ENCODE measurements at regions of chr12 and their contacts with region 1.

Region 1: DNA sequence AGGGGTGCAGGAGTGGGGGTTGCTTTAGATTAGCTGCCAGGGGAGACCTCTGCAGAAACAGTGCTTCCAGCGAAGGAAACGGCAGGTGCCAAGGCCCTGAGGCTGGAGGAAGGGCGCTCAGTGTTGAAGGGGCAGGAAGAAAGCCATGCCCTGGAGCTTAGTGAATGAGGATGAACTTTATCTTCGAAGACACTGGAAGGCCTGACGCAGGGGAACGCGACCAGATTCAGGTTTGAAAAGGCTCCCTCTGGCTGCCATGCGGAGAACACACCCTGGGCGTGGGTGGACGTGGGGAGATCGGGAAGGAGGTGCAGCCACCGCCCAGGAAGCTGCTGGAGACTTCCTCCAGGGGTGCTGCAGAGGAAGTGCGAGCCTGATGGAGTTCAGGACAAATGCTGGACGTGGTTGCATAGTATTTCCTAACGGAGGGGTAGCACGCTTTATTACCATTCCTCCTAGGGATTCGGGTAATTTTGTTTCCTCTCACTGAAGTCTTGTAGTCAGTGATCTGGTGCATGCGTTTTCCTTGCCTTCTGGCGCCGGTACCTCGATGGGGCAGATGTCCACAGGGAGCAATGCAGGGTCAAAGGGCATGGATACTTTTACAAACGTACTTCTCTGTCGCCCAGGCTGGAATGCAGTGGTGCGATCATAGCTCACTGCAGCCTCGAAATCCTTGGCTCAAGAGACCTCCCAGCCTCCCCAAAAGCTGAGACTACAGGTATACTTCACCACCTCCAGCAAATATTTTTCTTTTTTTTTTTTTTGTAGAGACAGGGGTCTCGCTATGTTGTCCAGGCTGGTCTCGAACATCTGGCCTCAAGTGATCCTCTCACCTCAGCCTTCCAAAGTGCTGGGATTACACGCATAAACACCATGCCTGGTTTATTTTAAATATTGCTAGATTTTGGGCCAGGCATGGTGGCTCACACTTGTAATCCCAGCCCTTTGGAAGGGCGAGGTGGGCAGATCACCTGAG is 26.4 kb upstream of the UBC start:
- DNase-seq: peak; percentile 80
- ATAC-seq: peak; percentile 53
- H3K4me3 Mint-ChIP-seq: no peak overlapping the region
- H3K27ac Mint-ChIP-seq: no peak overlapping the region
- H3K4me1 Mint-ChIP-seq: peaks cover 10% of the 10 kb centered on the region
- H3K27me3 Mint-ChIP-seq: no peaks in the 10 kb centered on the region

Region 2: DNA sequence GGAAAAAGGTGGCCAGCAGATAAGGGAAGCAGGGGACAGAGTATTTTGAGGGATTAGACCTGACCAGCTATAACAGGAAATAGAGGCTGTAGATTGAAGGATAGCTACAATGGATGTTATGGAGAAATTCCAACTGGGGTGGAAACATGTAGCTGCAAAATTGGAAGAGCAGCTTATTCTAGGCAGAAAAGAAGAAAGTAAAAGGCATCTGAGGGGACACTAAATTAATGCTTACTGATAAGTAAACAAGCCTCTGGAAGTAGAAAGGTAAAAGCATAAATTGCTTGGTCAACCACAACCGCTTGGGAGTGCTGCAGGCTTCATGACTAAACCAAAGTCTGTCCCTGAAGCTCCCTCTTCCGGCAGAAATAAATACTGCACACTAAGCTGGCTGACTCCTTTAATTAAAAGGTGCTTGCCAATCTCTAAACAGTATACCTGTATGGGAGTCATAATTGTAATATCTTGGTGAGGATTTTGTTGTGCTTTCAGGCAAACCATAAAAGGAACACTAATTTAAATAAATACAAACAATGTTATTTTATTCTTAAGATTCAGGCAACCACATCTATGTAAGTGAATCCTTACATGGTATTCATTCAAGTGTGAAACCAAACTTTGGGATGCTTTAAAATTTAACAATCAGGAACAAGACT is 34.1 kb before region 1 on chr12:
- POLR2A ChIA-PET with region 1: interaction called, 17 read pairs
- DNase-seq: peak; percentile 63
- ATAC-seq: peak; percentile 71
- H3K4me3 Mint-ChIP-seq: peak overlapping the region; percentile 20
- H3K27ac Mint-ChIP-seq: peak overlapping the region; percentile 47
- H3K4me1 Mint-ChIP-seq: peaks cover 21% of the 10 kb centered on the region
- H3K27me3 Mint-ChIP-seq: no peaks in the 10 kb centered on the region

Region 3: DNA sequence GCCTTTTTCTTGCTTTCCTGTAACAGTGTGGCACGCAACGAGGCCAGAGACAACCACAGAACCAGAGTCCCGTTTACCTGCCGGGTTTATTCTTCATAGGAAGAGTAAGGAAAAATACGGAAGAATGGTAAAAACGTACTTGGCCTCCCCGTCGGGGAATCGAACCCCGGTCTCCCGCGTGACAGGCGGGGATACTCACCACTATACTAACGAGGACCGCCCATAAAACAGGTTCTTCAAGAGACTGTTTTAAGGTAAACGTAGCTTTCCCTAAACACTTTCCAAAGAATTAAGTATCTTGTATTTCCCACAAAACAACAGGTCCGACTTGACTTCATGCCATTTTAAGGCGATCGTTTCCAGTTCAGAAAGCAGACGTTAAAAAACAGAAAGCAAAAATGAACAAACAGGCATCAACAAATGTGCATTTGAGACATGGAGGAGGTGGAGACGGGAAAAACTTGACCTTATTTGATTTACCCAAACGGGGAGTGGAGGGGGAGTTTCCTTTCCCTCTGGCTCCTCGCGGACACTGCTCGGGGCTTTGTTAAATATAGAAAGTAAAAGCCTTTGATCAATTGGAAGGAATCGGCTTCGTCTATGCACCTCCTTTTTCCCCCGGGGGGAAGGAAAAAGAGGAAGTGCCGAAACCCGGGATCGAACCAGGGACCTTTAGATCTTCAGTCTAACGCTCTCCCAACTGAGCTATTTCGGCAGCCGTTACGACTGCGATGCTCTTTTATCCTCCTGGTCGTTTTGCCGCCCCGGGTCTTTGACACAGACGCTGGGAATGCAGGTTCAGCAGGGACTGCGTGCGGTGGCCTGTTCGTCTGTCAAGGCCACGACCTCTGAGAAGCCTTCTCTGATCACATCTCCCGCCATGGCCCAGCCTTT is 13.4 kb before region 1 on chr12:
- POLR2A ChIA-PET with region 1: interaction called, 318 read pairs
- DNase-seq: peak; percentile 95
- ATAC-seq: peak; percentile 85
- H3K4me3 Mint-ChIP-seq: peak overlapping the region; percentile 92
- H3K27ac Mint-ChIP-seq: peak overlapping the region; percentile 90
- H3K4me1 Mint-ChIP-seq: peaks cover 25% of the 10 kb centered on the region
- H3K27me3 Mint-ChIP-seq: peaks cover 2% of the 10 kb centered on the region

Region 4: GRCh38 chr12:125049093-125049458 is 108.2 kb after region 1 on chr12:
- POLR2A ChIA-PET with region 1: no interaction called
- DNase-seq: no peak
- ATAC-seq: no peak
- H3K4me3 Mint-ChIP-seq: peak overlapping the region; percentile 92
- H3K27ac Mint-ChIP-seq: peak overlapping the region; percentile 85
- H3K4me1 Mint-ChIP-seq: peaks cover 4% of the 10 kb centered on the region
- H3K27me3 Mint-ChIP-seq: peaks cover 3% of the 10 kb centered on the region

Region 5: DNA sequence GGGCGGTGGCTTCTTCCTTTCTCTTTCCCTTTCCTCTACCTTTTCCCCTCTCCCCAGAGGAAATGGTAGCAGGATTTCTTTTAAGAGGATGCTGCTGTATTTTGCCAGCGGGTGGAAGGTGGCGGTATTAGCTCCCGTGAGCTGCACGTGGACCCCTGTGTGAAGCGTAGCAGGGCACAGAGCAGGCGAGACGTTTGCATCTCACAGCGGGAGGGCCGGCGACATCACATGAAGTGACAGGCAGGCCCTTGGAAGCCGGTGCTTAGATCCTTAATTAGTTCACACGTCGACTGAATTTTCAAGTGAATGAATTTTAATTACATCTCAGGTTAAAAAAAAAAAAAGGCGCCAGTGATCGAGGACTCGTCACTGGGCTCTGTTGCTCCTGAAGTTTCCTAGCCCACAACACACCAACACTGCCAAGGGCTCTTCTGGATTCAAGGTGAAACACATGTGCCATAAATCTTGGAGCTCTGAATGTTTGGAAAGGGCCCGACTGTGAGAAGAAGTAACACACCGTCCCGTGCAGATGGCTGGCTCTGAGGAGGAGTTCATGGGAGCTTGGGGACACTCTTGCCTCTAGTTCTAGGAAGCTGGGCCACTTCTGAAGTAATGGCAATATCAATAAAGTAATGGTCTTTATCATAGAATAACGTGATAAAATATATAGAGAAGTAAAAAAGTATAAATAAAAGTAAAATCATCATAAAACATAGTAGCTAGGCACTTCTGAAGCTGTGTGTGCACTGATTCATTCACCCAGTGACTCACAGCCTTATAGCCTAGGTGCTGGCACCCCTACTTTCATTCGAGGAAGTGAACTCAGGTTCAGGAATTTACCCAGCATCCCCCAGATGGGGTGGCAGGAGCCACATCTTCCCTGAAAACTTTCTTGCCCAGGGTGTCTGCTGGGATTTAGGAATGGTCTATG is 199.7 kb after region 1 on chr12:
- POLR2A ChIA-PET with region 1: no interaction called
- DNase-seq: no peak
- ATAC-seq: no peak
- H3K4me3 Mint-ChIP-seq: no peak overlapping the region
- H3K27ac Mint-ChIP-seq: no peak overlapping the region
- H3K4me1 Mint-ChIP-seq: peaks cover 2% of the 10 kb centered on the region
- H3K27me3 Mint-ChIP-seq: no peaks in the 10 kb centered on the region

Measured in activated naive CD8-positive, alpha-beta T cell treated with anti-CD3 and anti-CD28 coated beads, Interleukin-2, amount 10 ng/mL, durations not matched to agents 7 days and 5 days (primary cell).